Activated CD4-positive, alpha-beta memory T cell treated with anti-CD3 and anti-CD28 coated beads for 36 hours (primary cell): ENCODE measurements at regions of chr10 and their contacts with region 1.

Region 1: GRCh38 chr10:122388287-122388997 is 13.9 kb downstream of the PLEKHA1 start:
- DNase-seq: peak; percentile 74
- H3K4me3 Mint-ChIP-seq: no peak overlapping the region
- H3K27ac Mint-ChIP-seq: peak overlapping the region; percentile 60
- H3K4me1 Mint-ChIP-seq: peaks cover 60% of the 10 kb centered on the region
- H3K27me3 Mint-ChIP-seq: no peaks in the 10 kb centered on the region

Region 2: DNA sequence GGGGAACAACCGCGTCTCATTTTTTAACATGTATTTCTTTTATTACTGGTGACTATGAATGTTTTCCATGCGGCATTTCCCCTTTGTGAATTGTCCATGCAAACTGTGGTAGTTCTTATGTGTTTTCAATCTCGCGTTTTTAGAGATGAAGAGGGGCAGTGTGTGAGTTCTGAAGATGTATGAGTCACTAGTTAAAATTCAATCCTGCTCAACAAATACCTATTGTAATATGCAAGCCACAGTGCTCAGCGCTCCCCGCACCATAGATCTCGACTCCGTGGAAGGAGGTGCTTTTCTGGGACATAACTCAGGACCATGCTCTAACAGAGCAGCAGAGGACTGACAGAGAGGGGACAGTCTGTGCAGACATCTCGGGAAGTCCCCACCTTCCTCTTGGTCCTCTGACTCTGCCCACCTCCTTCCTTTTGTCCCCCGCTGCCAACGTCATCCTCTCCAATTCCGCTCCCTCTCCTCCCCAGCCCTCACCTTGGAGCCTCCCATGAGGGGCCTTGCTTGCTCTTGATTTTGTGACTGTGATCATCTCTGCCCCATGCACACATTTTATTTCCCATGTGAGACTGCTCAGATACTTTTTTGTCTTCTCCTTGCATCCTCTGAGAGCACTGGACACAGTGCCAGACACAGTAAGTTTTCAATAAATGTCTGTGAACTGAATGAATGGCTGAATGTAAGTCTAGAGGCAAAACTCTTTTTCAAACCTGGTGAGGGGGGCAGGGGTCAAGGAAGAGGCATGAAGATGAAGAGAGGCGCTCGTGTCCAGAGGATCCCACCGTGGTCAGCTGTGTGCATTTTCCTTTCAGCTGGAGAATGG is 56.6 kb before region 1 on chr10:
- CTCF ChIA-PET with region 1: no interaction called
- POLR2A ChIA-PET with region 1: no interaction called
- intact Hi-C with region 1: loop called (anchors 2 kb)
- DNase-seq: no peak
- H3K4me3 Mint-ChIP-seq: no peak overlapping the region
- H3K27ac Mint-ChIP-seq: no peak overlapping the region
- H3K4me1 Mint-ChIP-seq: peaks cover 6% of the 10 kb centered on the region
- H3K27me3 Mint-ChIP-seq: peaks cover 31% of the 10 kb centered on the region

Region 3: DNA sequence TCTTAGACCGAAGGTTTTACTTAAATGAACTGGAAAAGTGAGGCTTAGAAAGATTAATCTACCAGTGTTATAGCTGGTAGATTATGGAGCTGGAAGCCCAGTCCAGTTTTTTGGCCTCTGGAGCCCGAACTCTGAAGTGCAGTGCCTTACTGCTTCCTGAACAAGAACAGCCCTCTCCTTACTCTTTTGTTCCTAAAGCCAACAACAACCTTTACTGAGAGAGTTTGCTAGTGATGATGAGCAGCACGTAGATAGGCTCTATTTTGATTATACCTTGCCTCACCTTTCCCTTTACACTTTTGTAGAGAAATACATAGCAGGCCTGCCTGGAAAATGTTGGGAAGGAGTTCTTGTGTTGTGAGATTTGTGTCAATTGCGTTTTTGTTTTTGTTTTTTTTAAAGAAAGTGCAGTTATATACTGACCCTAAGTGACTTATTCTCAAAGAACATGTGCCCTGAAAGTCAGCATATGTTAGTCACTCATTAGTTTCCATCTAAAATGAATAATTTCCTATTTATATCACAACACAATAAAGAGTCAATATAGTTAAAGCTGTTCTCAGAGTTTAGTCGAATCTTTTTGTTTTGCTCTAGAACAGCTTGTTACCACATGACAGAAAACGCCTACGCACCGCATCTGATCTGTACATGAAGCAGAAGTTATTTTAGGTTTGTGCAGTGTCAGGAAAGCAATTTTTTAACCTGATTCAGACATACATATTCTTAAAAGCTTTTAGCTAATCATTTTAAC is 19.1 kb after region 1 on chr10:
- CTCF ChIA-PET with region 1: interaction called, 4 read pairs
- POLR2A ChIA-PET with region 1: no interaction called
- intact Hi-C with region 1: loop called (anchors 1 kb)
- DNase-seq: peak; percentile 79
- H3K4me3 Mint-ChIP-seq: no peak overlapping the region
- H3K27ac Mint-ChIP-seq: peak overlapping the region; percentile 78
- H3K4me1 Mint-ChIP-seq: peaks cover 45% of the 10 kb centered on the region
- H3K27me3 Mint-ChIP-seq: no peaks in the 10 kb centered on the region

Region 4: GRCh38 chr10:122419876-122420623 is 31.6 kb after region 1 on chr10:
- CTCF ChIA-PET with region 1: no interaction called
- POLR2A ChIA-PET with region 1: no interaction called
- intact Hi-C with region 1: loop called (anchors 1 kb)
- DNase-seq: no peak
- H3K4me3 Mint-ChIP-seq: no peak overlapping the region
- H3K27ac Mint-ChIP-seq: no peak overlapping the region
- H3K4me1 Mint-ChIP-seq: peaks cover 68% of the 10 kb centered on the region
- H3K27me3 Mint-ChIP-seq: no peaks in the 10 kb centered on the region

Region 5: DNA sequence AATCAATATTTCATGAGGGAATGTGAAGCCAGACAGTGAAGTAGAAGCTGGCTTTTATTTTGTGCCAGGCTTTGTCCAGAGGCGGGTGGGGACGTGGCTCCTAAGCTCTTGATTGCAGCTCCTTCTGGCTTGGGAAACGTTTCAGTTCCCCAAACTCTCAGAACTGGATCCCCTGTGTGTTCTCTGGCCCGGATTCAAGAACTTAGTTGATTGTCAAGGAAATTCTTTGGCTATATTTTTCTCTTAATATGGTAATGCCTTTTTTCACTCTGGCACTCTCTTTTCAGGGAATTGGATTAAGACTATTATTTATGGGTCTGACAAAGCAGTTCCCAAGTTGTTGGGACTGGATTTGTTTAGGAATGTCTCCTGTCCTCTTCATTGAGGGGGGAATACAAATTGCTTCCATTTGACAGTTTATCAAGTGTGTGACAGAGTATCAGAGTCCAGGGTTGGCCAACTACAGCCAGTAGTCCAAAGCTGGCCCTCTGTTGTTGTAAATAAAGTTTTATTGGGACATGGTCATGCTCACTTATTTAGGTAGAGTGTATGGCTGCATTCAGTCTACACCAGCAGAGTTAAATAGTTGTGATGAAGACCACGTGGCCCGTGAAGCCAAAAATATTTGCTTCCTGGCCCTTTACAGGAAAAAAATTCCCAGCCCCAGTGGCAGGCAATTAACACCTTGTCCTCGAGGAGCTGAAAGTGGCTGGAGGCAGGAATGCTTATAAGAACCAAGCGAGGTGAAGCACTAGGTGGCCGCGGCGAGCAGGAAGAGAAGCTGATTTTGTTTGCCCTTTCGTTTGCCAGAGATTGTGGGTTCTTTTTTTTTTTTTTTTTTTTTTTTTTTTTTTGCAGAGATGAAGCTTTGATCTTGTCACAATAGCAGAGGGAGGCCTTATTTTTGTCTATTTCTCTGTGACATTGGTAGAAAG is 107.2 kb after region 1 on chr10:
- CTCF ChIA-PET with region 1: no interaction called
- POLR2A ChIA-PET with region 1: no interaction called
- intact Hi-C with region 1: loop called (anchors 5 kb)
- DNase-seq: peak; percentile 26
- H3K4me3 Mint-ChIP-seq: no peak overlapping the region
- H3K27ac Mint-ChIP-seq: no peak overlapping the region
- H3K4me1 Mint-ChIP-seq: peaks cover 34% of the 10 kb centered on the region
- H3K27me3 Mint-ChIP-seq: peaks cover under 1% of the 10 kb centered on the region

Region 6: DNA sequence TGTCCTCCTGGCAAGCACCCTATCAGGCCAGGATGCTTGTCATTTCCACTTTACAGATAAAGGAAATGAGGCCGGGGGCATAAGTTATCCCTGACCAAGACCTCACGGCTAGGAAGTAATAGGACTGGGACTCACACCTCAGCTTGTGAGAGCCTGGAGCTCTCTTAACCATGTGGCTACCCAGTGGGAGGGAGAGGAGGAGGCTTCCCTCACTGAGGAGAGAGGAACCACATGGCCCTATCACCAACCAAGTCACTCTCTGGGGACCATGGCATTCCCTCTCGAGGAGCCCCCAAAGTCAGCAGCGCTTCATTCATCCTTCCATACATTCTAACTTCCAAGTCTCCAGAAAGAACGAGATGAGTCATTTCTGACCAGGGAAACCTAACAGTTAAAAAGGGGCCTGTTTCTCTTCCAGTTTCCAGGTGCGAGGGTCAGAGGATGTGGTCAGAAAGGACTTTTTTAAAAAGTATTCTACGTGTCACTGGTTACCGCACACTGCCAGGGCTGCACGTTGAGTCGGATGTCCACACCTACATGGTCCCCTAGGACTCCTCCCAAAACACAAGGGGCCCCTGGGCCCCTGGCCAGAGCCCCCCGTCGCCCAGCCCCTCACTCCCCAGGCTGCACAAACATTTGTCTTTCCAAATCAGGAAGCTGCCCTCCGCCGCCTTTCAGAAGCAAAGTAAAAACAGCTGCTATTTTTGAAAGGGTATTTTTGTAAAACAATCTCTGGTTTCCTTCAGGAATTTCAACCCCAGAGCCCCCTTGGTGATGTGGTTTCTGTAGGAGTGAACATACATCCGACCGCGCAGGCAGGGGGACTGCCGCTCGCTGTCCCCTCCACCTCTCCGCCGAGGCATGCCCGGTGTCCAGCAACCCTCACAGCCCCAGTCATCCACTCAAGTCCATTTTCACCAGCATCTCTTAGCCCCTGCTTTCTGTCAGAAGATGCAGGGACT is 1833.2 kb after region 1 on chr10:
- CTCF ChIA-PET with region 1: no interaction called
- POLR2A ChIA-PET with region 1: no interaction called
- intact Hi-C with region 1: loop called (anchors 5 kb)
- DNase-seq: no peak
- H3K4me3 Mint-ChIP-seq: no peak overlapping the region
- H3K27ac Mint-ChIP-seq: no peak overlapping the region
- H3K4me1 Mint-ChIP-seq: no peaks in the 10 kb centered on the region
- H3K27me3 Mint-ChIP-seq: peaks cover 9% of the 10 kb centered on the region